ENCODE measurements at regions of chr3 and their contacts with region 1.

Region 1: GRCh38 chr3:141231101-141231935 is at the start of gene PXYLP1:
- DNase-seq: peak; percentile 92
- H3K4me3 Mint-ChIP-seq: peak within 1 kb of the TSS; percentile 92
- H3K27ac Mint-ChIP-seq: peak within 1 kb of the TSS; percentile 98
- H3K4me1 Mint-ChIP-seq: peaks cover 54% of the 10 kb centered on the region
- H3K27me3 Mint-ChIP-seq: peaks cover 4% of the 10 kb centered on the region
- total RNA-seq, gene PXYLP1: 11.6 and 12.1 TPM in 2 replicates

Region 2: GRCh38 chr3:140941434-140942220 is 289.7 kb before region 1 on chr3 and contains the start of gene SLC25A36:
- intact Hi-C with region 1: loop called (anchors 2 kb)
- DNase-seq: peak; percentile 95
- H3K4me3 Mint-ChIP-seq: peak within 1 kb of the TSS; percentile 92
- H3K27ac Mint-ChIP-seq: peak within 1 kb of the TSS; percentile 95
- H3K4me1 Mint-ChIP-seq: peaks cover 36% of the 10 kb centered on the region
- H3K27me3 Mint-ChIP-seq: peaks cover 12% of the 10 kb centered on the region
- total RNA-seq, gene SLC25A36: 49.5 and 52.3 TPM in 2 replicates

Region 3: DNA sequence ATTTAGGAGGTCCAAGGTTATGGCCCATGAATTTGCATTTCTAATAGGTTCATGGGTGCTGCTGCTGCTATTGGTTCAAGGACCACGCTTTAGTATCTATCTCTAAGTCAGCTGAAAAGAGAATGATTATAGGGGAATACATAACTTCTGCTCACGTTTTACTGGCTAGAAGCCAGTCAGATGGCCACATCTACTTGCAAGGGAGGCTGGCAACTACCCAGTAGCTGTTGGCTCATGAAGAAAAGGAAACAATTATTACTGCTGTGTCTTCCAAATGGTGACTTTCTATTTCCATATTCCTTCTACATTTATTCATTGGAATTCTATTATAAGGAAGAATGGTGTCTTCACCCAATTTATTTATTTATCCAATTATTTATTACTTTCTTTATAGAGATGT is 235.4 kb before region 1 on chr3:
- intact Hi-C with region 1: no loop called
- DNase-seq: no peak
- H3K4me3 Mint-ChIP-seq: no peak overlapping the region
- H3K27ac Mint-ChIP-seq: no peak overlapping the region
- H3K4me1 Mint-ChIP-seq: peaks cover 5% of the 10 kb centered on the region
- H3K27me3 Mint-ChIP-seq: peaks cover 6% of the 10 kb centered on the region

Region 4: DNA sequence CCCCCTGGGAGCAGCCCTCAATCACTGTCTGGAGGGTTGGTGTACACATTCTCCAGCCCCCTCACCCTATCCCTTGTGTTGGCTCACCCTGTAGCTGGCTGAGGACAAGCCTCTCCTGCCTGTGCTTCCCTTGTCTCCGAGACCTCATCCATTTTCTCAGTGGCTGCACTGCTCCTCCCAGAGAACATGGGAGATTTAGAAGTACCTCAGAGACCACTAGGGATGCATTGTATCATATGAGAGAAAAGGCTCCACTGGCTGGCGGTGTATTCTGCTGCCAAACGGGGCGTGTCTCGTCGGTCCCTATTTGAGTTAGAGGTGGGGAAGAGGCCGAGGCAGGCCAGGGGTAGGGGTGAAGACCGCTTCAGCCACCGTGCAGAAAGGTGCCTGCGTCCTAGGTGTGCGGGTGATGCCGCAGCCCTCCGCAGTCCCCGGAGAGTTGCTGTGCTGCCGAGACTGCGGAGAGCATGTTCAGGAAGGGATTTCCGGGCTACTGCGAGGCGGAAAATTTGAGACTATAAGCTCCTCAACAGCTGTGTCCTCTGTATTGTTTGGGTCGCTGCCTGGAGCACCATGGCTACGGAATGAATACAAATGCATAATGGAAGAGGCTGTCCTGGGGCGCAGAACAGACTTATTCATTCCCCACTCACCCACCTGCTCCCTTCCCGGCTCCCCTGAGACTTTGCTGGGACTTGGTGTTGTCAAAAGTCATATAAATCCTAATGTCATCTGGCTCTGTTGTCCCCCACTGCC is 136.3 kb before region 1 on chr3:
- intact Hi-C with region 1: no loop called
- DNase-seq: no peak
- H3K4me3 Mint-ChIP-seq: no peak overlapping the region
- H3K27ac Mint-ChIP-seq: no peak overlapping the region
- H3K4me1 Mint-ChIP-seq: no peaks in the 10 kb centered on the region
- H3K27me3 Mint-ChIP-seq: peaks cover 2% of the 10 kb centered on the region

Region 5: DNA sequence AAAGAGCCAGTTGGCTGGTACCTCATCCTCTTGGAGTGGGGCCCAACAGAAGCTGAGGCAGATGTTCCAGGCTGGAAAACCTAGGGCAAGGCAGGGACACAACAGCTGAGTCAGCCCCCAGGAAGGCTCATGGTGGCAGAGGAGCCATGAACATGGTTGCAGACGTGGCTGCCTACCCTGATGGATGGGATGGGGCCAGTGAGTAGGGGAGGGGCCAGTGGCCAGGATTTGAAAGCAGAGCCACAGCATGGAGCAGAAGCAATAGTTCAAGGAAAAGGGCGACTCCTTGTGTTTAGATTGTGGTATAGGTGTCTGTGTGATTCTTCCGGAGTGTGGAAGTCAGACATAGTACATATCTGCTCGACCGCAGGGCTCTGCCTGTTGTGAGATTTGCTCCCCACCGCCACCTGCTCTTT is 24.5 kb after region 1 on chr3:
- intact Hi-C with region 1: loop called (anchors 1 kb)
- DNase-seq: peak; percentile 31
- H3K4me3 Mint-ChIP-seq: no peak overlapping the region
- H3K27ac Mint-ChIP-seq: peak overlapping the region; percentile 59
- H3K4me1 Mint-ChIP-seq: peaks cover 56% of the 10 kb centered on the region
- H3K27me3 Mint-ChIP-seq: no peaks in the 10 kb centered on the region

Region 6: DNA sequence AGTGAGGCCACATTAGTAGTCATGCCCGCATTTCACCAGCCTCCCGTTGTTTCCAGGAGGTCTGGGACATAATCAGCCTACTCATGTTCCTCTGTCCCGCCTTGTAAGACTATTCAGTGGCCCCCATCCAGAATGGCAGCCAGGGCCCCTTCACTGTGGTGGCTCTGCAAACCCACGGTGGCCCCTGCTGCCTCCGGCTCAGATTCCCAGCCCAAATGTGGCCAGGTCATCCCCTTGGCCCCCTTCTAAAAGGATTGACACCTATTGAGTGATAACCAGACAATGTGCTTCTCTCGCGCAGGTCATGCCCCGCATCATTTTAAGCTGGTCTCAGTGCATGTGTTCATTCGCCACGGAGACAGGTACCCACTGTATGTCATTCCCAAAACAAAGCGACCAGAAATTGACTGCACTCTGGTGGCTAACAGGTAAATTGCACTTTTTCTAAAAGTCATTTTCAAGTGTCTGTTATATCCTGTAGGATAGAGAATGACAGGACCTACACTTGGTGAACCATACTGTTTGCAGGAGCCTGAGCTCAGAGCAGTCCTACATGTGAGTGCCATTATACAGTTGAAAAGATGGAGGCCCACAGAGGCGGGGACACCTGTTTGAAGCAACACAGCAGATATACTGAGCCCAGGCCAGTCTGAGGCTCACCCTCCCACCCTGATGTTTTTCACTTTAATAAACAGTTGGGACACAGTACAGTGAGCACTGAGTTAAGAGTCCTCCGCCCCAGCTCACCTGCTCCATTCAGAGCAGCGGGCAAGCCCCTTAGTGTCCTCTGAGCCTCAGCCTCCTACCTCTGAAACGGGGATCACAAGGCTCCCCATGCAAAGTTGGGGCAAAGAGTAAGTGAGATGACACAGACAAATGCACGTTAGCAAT is 48.0 kb after region 1 on chr3:
- intact Hi-C with region 1: loop called (anchors 1 kb)
- DNase-seq: no peak
- H3K4me3 Mint-ChIP-seq: peak overlapping the region; percentile 9
- H3K27ac Mint-ChIP-seq: no peak overlapping the region
- H3K4me1 Mint-ChIP-seq: peaks cover 21% of the 10 kb centered on the region
- H3K27me3 Mint-ChIP-seq: no peaks in the 10 kb centered on the region

Region 7: GRCh38 chr3:141402476-141403171 is 171.3 kb after region 1 on chr3:
- intact Hi-C with region 1: loop called (anchors 2 kb)
- DNase-seq: peak; percentile 36
- H3K4me3 Mint-ChIP-seq: peak overlapping the region; percentile 85
- H3K27ac Mint-ChIP-seq: peak overlapping the region; percentile 62
- H3K4me1 Mint-ChIP-seq: peaks cover 31% of the 10 kb centered on the region
- H3K27me3 Mint-ChIP-seq: no peaks in the 10 kb centered on the region

Region 8: DNA sequence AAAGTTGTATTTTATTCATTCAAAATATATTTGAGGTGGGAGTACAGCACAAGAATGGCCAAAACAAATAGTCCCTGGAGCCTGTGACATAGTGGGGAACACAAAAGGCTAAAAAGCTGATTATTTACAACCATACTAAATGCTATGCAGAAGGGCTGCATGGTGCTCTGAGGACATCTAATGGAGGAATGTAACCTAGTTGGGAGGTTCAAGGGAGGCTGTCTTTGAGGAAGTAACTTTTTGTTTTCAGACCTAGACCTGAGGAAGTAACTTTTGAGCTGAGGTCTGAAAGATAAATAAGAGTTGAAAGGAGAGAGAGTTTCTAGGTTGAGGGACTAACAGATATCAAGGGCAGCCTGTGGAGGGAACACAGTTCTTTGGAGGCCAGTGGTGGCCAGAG is 220.7 kb after region 1 on chr3:
- intact Hi-C with region 1: loop called (anchors 1 kb)
- DNase-seq: peak; percentile 26
- H3K4me3 Mint-ChIP-seq: no peak overlapping the region
- H3K27ac Mint-ChIP-seq: no peak overlapping the region
- H3K4me1 Mint-ChIP-seq: peaks cover 18% of the 10 kb centered on the region
- H3K27me3 Mint-ChIP-seq: no peaks in the 10 kb centered on the region

Region 9: GRCh38 chr3:141553055-141553454 is 321.7 kb after region 1 on chr3:
- intact Hi-C with region 1: loop called (anchors 5 kb)
- DNase-seq: peak; percentile 35
- H3K4me3 Mint-ChIP-seq: peak overlapping the region; percentile 38
- H3K27ac Mint-ChIP-seq: peak overlapping the region; percentile 93
- H3K4me1 Mint-ChIP-seq: peaks cover 52% of the 10 kb centered on the region
- H3K27me3 Mint-ChIP-seq: no peaks in the 10 kb centered on the region

Region 10: GRCh38 chr3:142098964-142099363 is 867.6 kb after region 1 on chr3:
- intact Hi-C with region 1: no loop called
- DNase-seq: no peak
- H3K4me3 Mint-ChIP-seq: no peak overlapping the region
- H3K27ac Mint-ChIP-seq: no peak overlapping the region
- H3K4me1 Mint-ChIP-seq: peaks cover 5% of the 10 kb centered on the region
- H3K27me3 Mint-ChIP-seq: no peaks in the 10 kb centered on the region

Measured in activated T-helper 1 cell treated with anti-CD3 and anti-CD28 coated beads, Interleukin-12 subunit alpha, Interleukin-12 subunit beta, Interleukin-2, Interleukin-4 antibody, amounts not matched to agents 30 ng/mL and 10 ng/mL and 1 ng/mL, durations not matched to agents 14 hours and 24 hours and 36 hours (primary cell).